ENCODE measurements at regions of chr6 and their contacts with region 1.

Region 1: GRCh38 chr6:119147101-119148053 is 68.9 kb upstream of the FAM184A start:
- DNase-seq: peak; percentile 81
- ATAC-seq: peak; percentile 93
- H3K4me3 Mint-ChIP-seq: no peak overlapping the region
- H3K27ac Mint-ChIP-seq: peak overlapping the region; percentile 85
- H3K4me1 Mint-ChIP-seq: peaks cover 53% of the 10 kb centered on the region
- H3K27me3 Mint-ChIP-seq: peaks cover 2% of the 10 kb centered on the region

Region 2: GRCh38 chr6:119129148-119129967 is 18.0 kb before region 1 on chr6:
- CTCF ChIA-PET with region 1: interaction called, 14 read pairs
- DNase-seq: no peak
- ATAC-seq: peak; percentile 76
- H3K4me3 Mint-ChIP-seq: no peak overlapping the region
- H3K27ac Mint-ChIP-seq: no peak overlapping the region
- H3K4me1 Mint-ChIP-seq: peaks cover 8% of the 10 kb centered on the region
- H3K27me3 Mint-ChIP-seq: peaks cover 2% of the 10 kb centered on the region

Region 3: DNA sequence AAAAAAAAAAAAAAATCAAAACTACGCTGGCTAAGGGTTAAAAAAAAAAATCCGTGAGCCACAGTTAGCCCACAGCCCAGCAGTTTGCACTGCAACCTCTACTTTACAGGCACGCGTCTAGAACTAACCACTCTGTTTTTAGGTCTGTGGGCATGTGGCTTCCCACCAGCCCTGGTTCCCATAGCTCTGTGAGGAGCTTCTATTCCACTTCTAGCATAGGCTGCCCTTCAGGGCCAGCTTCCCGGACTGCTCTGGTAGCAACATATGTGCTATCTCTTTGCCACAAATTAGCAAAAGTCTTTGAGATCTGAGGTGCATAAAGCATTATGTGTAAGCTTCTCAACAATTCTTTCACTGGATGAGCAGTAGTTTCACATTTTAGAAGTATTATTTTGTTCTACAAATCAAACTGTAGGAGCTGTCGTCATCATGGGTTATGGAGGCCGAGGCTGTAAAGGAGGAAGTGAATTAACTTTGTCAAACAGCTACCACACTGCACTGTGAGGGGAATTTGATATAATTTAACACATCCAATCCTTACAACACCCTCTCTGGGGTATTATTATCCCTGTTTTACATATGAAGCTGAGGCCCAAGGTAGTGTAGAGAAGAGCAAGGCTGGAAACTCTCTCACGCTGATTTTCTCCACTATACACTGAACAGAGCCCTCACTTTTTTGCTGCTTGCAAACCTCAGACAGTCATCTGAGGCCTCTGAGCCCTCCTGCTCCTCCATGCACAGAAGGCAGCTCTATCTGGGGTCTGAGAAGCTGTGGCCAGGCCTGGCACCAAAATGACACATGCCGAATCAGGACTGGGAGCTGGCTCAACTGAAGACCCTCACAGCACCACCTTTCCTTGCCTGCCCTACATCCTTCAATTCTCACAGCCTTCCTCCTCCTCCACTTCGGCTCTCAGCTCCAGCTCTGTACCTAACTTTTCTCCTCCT is 166.8 kb after region 1 on chr6:
- CTCF ChIA-PET with region 1: interaction called, 18 read pairs
- DNase-seq: peak; percentile 91
- ATAC-seq: peak; percentile 71
- H3K4me3 Mint-ChIP-seq: peak overlapping the region; percentile 70
- H3K27ac Mint-ChIP-seq: peak overlapping the region; percentile 97
- H3K4me1 Mint-ChIP-seq: peaks cover 86% of the 10 kb centered on the region
- H3K27me3 Mint-ChIP-seq: no peaks in the 10 kb centered on the region

Region 4: DNA sequence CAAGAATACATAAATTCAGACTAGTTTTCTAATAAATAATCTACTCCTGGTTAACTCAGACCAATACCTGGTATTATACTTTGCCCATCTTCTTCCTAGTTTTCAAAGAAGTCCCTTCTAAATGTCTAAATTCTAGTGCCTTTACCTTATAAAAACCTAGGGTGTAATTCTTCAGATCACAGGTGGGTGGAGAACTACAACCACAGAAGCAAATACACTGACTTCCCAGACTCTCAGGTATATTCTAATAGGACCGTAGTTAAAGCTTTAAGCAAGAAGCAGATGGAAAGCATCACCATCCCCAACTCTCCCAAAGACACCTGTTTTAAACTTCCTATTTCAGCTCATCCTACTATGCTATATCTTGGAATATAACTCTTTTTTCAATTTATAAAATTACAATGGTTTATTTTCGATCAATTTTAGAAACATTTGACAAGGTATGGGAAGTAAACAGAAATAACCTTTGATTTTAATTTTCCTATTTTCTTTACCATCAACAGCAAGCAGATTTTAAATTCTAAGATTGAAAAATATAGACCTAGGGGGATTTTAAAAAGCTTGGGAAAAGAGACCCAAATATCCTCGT is 186.4 kb after region 1 on chr6:
- CTCF ChIA-PET with region 1: interaction called, 12 read pairs
- DNase-seq: no peak
- ATAC-seq: peak; percentile 54
- H3K4me3 Mint-ChIP-seq: no peak overlapping the region
- H3K27ac Mint-ChIP-seq: no peak overlapping the region
- H3K4me1 Mint-ChIP-seq: peaks cover 76% of the 10 kb centered on the region
- H3K27me3 Mint-ChIP-seq: no peaks in the 10 kb centered on the region

Region 5: GRCh38 chr6:119349323-119350042 is 202.1 kb after region 1 on chr6 and contains the start of gene MAN1A1:
- CTCF ChIA-PET with region 1: interaction called, 14 read pairs
- DNase-seq: peak; percentile 92
- ATAC-seq: peak; percentile 87
- H3K4me3 Mint-ChIP-seq: peak within 1 kb of the TSS; percentile 91
- H3K27ac Mint-ChIP-seq: peak within 1 kb of the TSS; percentile 89
- H3K4me1 Mint-ChIP-seq: peaks cover 41% of the 10 kb centered on the region
- H3K27me3 Mint-ChIP-seq: no peaks in the 10 kb centered on the region
- total RNA-seq, gene MAN1A1: 34.8 to 38.4 TPM

Measured in activated CD8-positive, alpha-beta memory T cell treated with anti-CD3 and anti-CD28 coated beads, Interleukin-2, amount 10 ng/mL, durations not matched to agents 7 days and 5 days (primary cell).